MCF 10A (cell line): ENCODE measurements at regions of chr16 and their contacts with region 1.

Region 1: GRCh38 chr16:31873556-31874365 is at the start of gene ZNF267:
- DNase-seq: peak; percentile 96
- H3K4me3 Mint-ChIP-seq: peak within 1 kb of the TSS; percentile 91
- H3K27ac Mint-ChIP-seq: peak within 1 kb of the TSS; percentile 94
- H3K4me1 Mint-ChIP-seq: peaks cover 41% of the 10 kb centered on the region
- H3K27me3 Mint-ChIP-seq: no peaks in the 10 kb centered on the region
- CTCF ChIP-seq: no peak
- total RNA-seq, gene ZNF267: 10.1 and 10.6 TPM in 2 replicates

Region 2: GRCh38 chr16:31507929-31508705 is 365.6 kb before region 1 on chr16 and contains the start of gene RUSF1:
- CTCF ChIA-PET with region 1: interaction called, 7 read pairs
- POLR2A ChIA-PET with region 1: interaction called, 16 read pairs
- intact Hi-C with region 1: loop called (anchors 5 kb)
- DNase-seq: peak; percentile 84
- H3K4me3 Mint-ChIP-seq: peak within 1 kb of the TSS; percentile 88
- H3K27ac Mint-ChIP-seq: peak within 1 kb of the TSS; percentile 98
- H3K4me1 Mint-ChIP-seq: peaks cover 22% of the 10 kb centered on the region
- H3K27me3 Mint-ChIP-seq: no peaks in the 10 kb centered on the region
- CTCF ChIP-seq: no peak
- total RNA-seq, gene RUSF1: 72.0 and 88.8 TPM in 2 replicates

Region 3: DNA sequence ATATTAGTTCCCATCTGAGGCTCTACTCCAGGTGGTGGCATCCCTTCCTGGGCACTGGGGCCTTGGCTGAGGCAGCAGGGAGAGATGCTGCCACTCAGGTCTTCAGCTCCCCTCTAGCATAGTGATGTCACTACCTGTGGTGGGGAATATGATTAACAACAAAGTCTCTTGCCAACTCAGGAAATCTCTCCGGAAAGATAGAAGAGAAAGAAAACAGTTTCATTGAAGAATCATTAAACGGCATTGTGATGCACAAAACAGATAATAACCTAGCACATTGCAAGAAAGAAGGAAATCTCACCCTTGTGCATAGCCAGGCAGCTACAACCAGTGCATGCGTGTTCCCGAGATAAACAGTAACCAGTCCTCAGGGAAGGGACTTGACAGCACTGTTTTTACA is 12.3 kb before region 1 on chr16:
- CTCF ChIA-PET with region 1: interaction called, 108 read pairs
- POLR2A ChIA-PET with region 1: interaction called, 5 read pairs
- intact Hi-C with region 1: no loop called
- DNase-seq: no peak
- H3K4me3 Mint-ChIP-seq: no peak overlapping the region
- H3K27ac Mint-ChIP-seq: no peak overlapping the region
- H3K4me1 Mint-ChIP-seq: no peaks in the 10 kb centered on the region
- H3K27me3 Mint-ChIP-seq: peaks cover 38% of the 10 kb centered on the region
- CTCF ChIP-seq: no peak

Region 4: GRCh38 chr16:31916056-31916488 is 42.3 kb after region 1 on chr16:
- CTCF ChIA-PET with region 1: no interaction called
- POLR2A ChIA-PET with region 1: no interaction called
- intact Hi-C with region 1: no loop called
- DNase-seq: no peak
- H3K4me3 Mint-ChIP-seq: no peak overlapping the region
- H3K27ac Mint-ChIP-seq: no peak overlapping the region
- H3K4me1 Mint-ChIP-seq: no peaks in the 10 kb centered on the region
- H3K27me3 Mint-ChIP-seq: no peaks in the 10 kb centered on the region
- CTCF ChIP-seq: no peak